ENCODE measurements at regions of chr5 and their contacts with region 1.

Region 1: DNA sequence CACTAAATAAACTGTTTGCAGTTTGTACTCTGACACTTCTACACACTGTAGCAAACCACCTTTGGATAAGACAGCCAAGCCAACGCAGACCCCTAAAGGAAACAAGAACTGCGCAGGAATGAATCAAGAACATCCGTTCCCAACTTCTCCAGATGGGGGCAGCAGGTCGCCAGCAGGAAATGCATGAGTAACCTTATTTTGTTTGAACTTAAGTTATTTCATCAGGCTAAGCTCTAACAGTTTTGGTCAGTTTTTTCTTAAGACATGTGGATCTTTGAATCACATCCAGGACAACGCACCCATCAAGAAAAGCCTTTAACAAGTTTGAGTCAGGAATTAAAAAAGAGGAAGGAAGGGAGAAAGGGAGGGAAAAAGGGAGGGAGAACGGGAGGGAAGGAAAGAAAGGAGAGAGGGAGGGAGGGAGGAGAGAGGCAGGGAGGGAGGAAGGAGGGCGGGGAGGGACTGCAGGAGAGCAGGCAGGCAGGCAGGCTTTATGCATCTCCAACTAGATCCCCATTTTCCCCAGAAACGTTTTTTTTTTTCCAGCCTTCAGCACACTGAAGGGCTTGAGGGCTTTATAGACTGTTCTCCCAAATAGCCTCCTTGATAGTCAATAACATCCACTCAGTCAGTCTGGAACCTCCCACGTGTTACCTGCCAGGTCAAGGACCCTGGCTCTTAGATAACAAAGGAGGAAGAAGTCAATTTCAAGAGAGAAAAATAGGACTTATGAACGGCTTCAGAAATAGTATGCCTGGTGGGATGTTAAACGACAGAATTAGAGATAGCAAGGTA is 22.2 kb downstream of the BHMT start:
- DNase-seq: peak in 4 of 5 donors; percentile 80 to 93 (median 90)
- H3K4me3 ChIP-seq: peak overlapping the region; percentile 32 to 54 (median 52)
- H3K27ac ChIP-seq: peak overlapping the region; percentile 10 to 20
- H3K4me1 ChIP-seq: peaks cover 0 to 2% (median 0%) of the 10 kb centered on the region in 3 donors
- H3K27me3 ChIP-seq: peaks cover 2% of the 10 kb centered on the region
- CTCF ChIP-seq: peak; percentile 65

Region 2: GRCh38 chr5:79330071-79330470 is 196.2 kb after region 1 on chr5:
- intact Hi-C with region 1: no loop called
- DNase-seq: no peak
- H3K4me3 ChIP-seq: no peak overlapping the region
- H3K27ac ChIP-seq: no peak overlapping the region
- H3K4me1 ChIP-seq: no peaks in the 10 kb centered on the region
- H3K27me3 ChIP-seq: no peaks in the 10 kb centered on the region
- CTCF ChIP-seq: no peak

Region 3: GRCh38 chr5:79464695-79465332 is 331.0 kb after region 1 on chr5:
- intact Hi-C with region 1: loop called (anchors 10 kb)
- DNase-seq: peak in 3 of 5 donors; percentile 27 to 44 (median 37)
- H3K4me3 ChIP-seq: peak overlapping the region in 2 of 3 donors; percentile 10 to 16
- H3K27ac ChIP-seq: no peak overlapping the region
- H3K4me1 ChIP-seq: no peaks in the 10 kb centered on the region
- H3K27me3 ChIP-seq: no peaks in the 10 kb centered on the region
- CTCF ChIP-seq: peak; percentile 52